ENCODE measurements at regions of chr3 and their contacts with region 1.

Region 1: DNA sequence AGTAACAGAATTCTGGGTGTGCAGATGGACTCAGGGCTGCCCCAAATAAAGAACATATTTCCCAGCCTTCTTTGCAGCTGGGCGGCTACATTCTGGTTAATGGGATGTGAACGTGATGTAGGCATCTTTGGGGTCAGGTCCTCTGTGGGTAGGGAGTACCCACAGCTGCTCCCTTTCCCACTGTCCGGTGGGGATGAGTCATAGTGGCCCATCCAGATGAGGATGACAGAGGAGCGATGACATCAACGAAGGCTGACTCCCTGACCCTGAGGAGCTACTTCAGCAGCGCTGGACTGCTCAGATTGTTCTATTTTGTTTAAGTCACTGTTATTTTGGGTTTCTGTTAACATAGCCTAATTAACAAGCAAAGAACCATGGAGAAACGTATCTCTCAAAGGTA is 38.0 kb downstream of the SRPRB start:
- DNase-seq: no peak
- H3K4me3 ChIP-seq: no peak overlapping the region
- CTCF ChIP-seq: no peak
- POLR2A ChIP-seq: no peak

Region 2: GRCh38 chr3:132788301-132788671 is 1055.3 kb before region 1 on chr3:
- intact Hi-C with region 1: loop called (anchors 5 kb)
- DNase-seq: peak in 1 of 2 donors; percentile 25
- H3K4me3 ChIP-seq: no peak overlapping the region
- CTCF ChIP-seq: no peak
- POLR2A ChIP-seq: no peak

Region 3: GRCh38 chr3:133620066-133620784 is 223.4 kb before region 1 on chr3:
- intact Hi-C with region 1: no loop called
- DNase-seq: no peak
- H3K4me3 ChIP-seq: no peak overlapping the region
- CTCF ChIP-seq: no peak
- POLR2A ChIP-seq: no peak

Region 4: GRCh38 chr3:133979553-133979952 is 135.9 kb after region 1 on chr3:
- intact Hi-C with region 1: no loop called
- DNase-seq: no peak
- H3K4me3 ChIP-seq: no peak overlapping the region
- CTCF ChIP-seq: no peak
- POLR2A ChIP-seq: no peak

Region 5: DNA sequence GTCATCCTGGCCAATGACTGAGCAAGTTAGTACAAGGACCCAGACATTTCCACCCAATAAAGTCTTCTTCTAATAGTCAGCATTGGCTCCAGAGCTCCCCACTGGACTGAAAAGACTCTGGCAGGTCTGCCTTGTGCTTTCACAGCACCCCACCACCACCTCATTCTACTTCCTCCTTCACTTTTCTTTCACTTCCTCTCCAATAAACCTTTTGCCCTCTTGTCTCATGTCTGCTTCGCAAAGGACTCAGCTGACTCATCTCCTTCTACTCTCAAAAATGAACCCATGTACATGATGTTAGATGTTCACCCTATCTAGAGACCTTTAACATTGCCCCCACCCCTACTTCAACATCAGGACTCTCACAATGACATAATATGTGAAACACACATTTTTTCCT is 1940.9 kb after region 1 on chr3:
- intact Hi-C with region 1: no loop called
- DNase-seq: no peak
- H3K4me3 ChIP-seq: no peak overlapping the region
- CTCF ChIP-seq: no peak
- POLR2A ChIP-seq: no peak